ENCODE measurements at regions of chr14 and their contacts with region 1.

Region 1: DNA sequence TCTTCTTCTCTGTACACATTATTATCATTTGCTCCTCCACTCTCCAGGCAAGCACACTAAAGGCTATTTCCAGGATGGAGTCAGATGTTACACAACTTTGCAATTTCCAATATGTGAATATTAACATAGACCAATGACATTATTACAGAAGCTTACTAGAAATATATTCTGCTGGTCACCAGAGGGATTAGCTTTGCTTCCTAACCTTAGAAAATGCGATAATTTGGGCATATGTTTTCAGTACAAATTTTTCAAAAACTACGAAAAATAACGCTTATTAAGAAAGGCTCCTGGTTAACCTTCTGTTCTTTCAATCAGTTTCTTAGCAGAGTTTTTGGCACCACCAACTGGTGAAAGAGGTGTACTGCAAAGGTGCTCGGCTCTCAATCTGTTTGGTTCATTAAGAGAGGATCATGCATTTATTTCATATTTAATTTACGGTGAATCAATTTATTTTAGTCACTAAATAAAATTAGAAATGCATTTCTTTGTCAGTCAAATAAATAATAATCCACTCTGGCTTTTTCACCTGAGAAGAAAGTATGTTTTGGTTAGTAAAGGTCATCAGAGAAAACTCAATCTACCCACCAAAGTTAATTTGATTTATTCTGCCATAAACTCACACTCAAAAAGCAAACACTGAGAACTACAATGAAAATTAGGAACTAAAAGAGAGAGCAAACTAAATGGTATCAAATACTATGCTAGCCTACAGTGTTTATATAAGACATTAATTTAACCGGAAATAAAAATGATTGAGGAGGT is 39.2 kb downstream of the EFCAB11 start:
- DNase-seq: peak in 4 of 5 donors; percentile 51 to 86 (median 76)
- H3K4me3 ChIP-seq: peak overlapping the region in 1 of 3 donors; percentile 35
- H3K27ac ChIP-seq: no peak overlapping the region
- H3K4me1 ChIP-seq: peaks cover 0 to 12% (median 5%) of the 10 kb centered on the region in 3 donors
- H3K27me3 ChIP-seq: no peaks in the 10 kb centered on the region
- CTCF ChIP-seq: peak; percentile 87

Region 2: GRCh38 chr14:89027097-89027740 is 888.1 kb before region 1 on chr14:
- intact Hi-C with region 1: loop called (anchors 10 kb)
- DNase-seq: peak; percentile 47 to 76 (median 74)
- H3K4me3 ChIP-seq: peak overlapping the region; percentile 25 to 57 (median 55)
- H3K27ac ChIP-seq: no peak overlapping the region
- H3K4me1 ChIP-seq: peaks cover 0 to 5% (median 0%) of the 10 kb centered on the region in 3 donors
- H3K27me3 ChIP-seq: peaks cover 2% of the 10 kb centered on the region
- CTCF ChIP-seq: peak; percentile 77

Region 3: GRCh38 chr14:90159146-90159545 is 243.8 kb after region 1 on chr14:
- intact Hi-C with region 1: no loop called
- DNase-seq: peak in 3 of 5 donors; percentile 3 to 42 (median 8)
- H3K4me3 ChIP-seq: no peak overlapping the region
- H3K27ac ChIP-seq: no peak overlapping the region
- H3K4me1 ChIP-seq: no peaks in the 10 kb centered on the region
- H3K27me3 ChIP-seq: no peaks in the 10 kb centered on the region
- CTCF ChIP-seq: no peak

Measured in kidney (tissue), 22 donors.